MCF 10A (cell line): ENCODE measurements at regions of chr22 and their contacts with region 1.

Region 1: DNA sequence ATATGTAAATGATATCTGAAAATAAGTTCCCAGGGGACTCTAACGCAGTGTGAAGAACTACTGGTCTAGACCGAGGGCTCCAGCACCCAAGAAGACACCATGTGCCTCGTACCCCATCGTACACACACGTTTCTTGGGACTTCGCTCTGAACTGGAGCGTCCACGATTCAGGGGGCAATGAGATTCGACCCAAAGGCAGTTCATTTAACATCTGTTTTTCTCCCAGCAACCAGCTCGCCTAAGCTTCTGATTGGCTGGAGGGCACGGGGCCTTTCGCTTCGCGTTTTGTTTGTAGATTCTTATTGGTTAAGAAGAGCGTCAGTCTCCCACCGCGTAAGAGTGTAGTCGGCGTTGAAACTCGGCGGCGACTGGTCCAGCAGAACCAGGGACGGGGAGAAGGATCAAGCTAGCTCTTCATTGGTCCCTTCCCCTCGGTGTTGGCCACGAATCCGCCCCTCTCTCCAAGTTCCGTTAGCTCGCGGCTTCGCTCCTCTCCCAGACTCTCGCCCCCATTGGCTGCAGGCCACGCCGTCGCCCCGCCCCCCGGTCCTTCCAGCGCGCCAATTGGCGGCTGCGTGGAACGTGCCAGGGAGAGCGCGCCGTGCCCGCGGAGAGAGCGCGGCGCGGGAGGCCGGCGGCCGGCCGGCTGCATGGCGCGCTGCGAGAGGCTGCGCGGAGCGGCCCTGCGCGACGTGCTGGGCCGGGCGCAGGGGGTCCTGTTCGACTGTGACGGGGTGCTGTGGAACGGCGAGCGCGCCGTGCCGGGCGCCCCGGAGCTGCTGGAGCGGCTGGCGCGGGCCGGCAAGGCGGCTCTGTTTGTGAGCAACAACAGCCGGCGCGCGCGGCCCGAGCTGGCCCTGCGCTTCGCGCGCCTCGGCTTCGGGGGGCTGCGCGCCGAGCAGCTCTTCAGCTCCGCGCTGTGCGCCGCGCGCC is at the start of gene PDXP:
- DNase-seq: peak; percentile 100
- H3K4me3 Mint-ChIP-seq: peak within 1 kb of the TSS; percentile 89
- H3K27ac Mint-ChIP-seq: peak within 1 kb of the TSS; percentile 87
- H3K4me1 Mint-ChIP-seq: peaks cover 22% of the 10 kb centered on the region
- H3K27me3 Mint-ChIP-seq: no peaks in the 10 kb centered on the region
- CTCF ChIP-seq: no peak
- total RNA-seq, gene PDXP: 10.3 and 10.5 TPM in 2 replicates

Region 2: DNA sequence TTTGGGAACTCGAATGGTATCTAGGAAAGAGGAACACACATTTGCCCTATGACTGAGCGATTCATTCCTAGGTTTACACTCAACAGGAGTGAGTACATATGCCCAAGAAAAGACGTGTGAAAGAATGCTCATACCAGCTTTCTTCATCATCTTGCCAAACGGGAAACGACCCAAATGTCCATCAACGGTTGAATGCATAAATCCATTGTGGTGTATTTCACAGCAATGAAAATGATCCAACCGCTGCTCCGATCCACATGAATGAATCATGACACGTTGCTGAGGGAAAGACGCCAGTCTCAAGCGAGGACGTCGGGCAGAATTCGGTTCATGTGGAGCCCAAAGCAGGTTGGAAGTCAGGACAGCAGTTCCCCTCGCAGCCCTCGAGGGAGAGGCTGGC is 304.6 kb before region 1 on chr22:
- CTCF ChIA-PET with region 1: no interaction called
- POLR2A ChIA-PET with region 1: no interaction called
- intact Hi-C with region 1: no loop called
- DNase-seq: no peak
- H3K4me3 Mint-ChIP-seq: no peak overlapping the region
- H3K27ac Mint-ChIP-seq: no peak overlapping the region
- H3K4me1 Mint-ChIP-seq: no peaks in the 10 kb centered on the region
- H3K27me3 Mint-ChIP-seq: no peaks in the 10 kb centered on the region
- CTCF ChIP-seq: no peak

Region 3: GRCh38 chr22:37588546-37589215 is 69.7 kb before region 1 on chr22:
- CTCF ChIA-PET with region 1: no interaction called
- POLR2A ChIA-PET with region 1: no interaction called
- intact Hi-C with region 1: no loop called
- DNase-seq: no peak
- H3K4me3 Mint-ChIP-seq: no peak overlapping the region
- H3K27ac Mint-ChIP-seq: no peak overlapping the region
- H3K4me1 Mint-ChIP-seq: peaks cover 12% of the 10 kb centered on the region
- H3K27me3 Mint-ChIP-seq: no peaks in the 10 kb centered on the region
- CTCF ChIP-seq: no peak

Region 4: DNA sequence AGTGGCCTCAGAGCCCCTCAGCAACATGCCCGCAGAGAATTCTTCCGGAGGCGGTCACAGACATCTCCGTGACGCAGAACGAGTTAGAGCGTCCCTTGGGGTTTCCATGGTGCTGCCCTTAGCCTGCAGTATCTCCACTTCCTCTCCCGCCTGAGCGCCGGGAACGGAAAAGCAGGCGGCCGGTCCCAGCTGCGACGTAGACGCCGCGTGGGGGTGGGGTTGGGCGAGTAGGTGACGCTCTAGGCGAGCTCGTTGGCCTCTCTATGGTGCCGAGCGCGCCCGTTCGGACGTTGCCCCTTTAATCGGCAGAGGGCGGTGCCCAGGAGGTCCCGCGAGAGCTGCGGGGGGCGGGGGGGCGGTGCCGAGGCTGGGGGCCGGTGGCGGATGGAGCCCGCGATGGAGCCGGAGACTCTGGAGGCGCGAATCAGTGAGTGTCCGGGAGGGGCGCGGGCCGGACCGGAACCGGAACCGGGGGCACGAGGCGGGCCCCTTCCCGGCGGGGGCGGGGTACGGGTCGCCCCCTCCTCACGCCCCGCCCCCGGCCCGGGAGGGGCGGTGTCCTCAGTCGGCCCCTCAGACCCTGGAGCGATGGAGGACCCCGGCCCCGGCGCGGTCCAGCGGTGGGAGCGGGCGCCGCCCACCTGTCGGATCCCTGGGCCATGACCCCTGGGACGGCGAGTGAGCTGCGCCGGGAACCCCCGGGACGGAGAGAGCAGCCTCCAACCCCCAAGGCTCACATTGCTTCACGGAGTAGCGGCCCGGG is 49.7 kb before region 1 on chr22 and contains the start of gene GGA1:
- CTCF ChIA-PET with region 1: interaction called, 3 read pairs
- POLR2A ChIA-PET with region 1: interaction called, 23 read pairs
- intact Hi-C with region 1: no loop called
- DNase-seq: peak; percentile 96
- H3K4me3 Mint-ChIP-seq: peak within 1 kb of the TSS; percentile 85
- H3K27ac Mint-ChIP-seq: peak within 1 kb of the TSS; percentile 98
- H3K4me1 Mint-ChIP-seq: peaks cover 12% of the 10 kb centered on the region
- H3K27me3 Mint-ChIP-seq: no peaks in the 10 kb centered on the region
- CTCF ChIP-seq: no peak
- total RNA-seq, gene GGA1: 52.7 and 59.1 TPM in 2 replicates

Region 5: DNA sequence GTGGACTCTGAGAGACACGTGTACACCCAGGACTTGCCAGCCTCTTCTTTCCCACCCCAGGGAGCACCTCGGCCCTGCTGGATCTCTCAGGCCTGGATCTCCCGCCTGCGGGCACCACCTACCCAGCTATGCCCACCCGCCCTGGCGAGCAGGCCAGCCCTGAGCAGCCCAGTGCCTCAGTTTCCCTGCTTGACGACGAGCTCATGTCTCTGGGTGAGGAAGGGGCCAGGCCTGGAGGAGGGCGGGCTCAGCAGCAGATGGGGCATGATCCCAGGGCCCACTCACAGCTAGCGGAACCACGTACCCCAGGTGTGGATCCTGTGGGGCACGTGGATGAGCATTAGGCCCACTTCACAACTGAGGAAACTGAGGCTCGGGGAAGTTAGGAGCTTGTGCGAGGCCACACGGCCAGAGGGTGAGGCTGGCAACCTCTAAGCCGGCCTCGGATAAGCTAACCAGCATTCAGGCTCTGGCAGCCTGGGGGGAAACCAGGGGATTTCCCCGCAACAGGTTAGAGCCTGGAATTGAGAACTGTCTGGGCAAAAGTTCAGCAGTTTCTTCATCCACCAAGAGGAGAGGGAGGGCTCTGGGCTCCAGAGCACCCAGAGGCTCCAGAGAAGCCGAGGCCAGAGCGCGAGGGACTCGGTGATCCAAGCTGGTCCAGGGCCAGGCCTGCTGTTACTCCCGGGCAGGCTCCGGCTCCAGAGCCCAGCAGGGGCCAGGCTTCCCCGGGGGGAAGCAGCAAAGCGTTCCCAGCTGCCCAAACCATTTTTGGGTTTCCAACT is 32.5 kb before region 1 on chr22:
- CTCF ChIA-PET with region 1: no interaction called
- POLR2A ChIA-PET with region 1: no interaction called
- intact Hi-C with region 1: no loop called
- DNase-seq: no peak
- H3K4me3 Mint-ChIP-seq: no peak overlapping the region
- H3K27ac Mint-ChIP-seq: no peak overlapping the region
- H3K4me1 Mint-ChIP-seq: no peaks in the 10 kb centered on the region
- H3K27me3 Mint-ChIP-seq: no peaks in the 10 kb centered on the region
- CTCF ChIP-seq: no peak

Region 6: DNA sequence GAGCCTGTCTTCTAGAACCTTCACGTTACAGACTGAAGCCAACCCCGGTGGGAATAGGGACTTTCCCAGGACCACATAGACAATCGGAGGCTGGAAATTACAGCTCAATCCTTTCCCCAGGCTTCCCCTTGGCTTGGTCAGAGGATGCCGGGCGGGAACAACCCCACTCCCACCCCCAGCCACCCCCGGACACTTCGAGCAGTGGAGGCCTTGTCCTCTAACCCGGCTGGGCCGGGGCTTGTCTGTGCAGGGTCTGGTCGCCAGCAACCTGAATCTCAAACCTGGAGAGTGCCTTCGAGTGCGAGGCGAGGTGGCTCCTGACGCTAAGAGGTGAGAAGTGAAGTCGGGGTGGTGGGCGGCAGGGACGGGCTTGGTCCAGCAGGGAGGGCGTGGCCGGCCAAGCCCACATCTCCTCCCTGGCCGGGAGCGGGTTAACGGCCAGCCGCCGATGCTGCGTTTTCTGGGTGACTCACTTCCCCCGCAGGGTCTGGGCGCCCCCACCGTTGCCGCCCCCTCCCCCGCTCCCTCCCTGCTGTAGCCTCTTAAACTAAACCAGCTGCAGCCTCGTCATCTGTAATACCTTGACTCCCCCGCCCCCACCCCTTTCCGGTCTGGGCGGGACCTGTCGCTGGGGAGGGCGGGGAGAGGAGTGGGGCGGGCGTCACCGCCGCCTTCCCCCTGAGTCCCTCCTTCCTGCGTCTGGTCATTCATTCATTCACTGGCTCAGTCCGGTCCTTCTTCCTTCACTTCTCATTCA is 18.5 kb after region 1 on chr22:
- CTCF ChIA-PET with region 1: interaction called, 30 read pairs
- POLR2A ChIA-PET with region 1: interaction called, 49 read pairs
- intact Hi-C with region 1: loop called (anchors 2 kb)
- DNase-seq: peak; percentile 94
- H3K4me3 Mint-ChIP-seq: peak overlapping the region; percentile 75
- H3K27ac Mint-ChIP-seq: peak overlapping the region; percentile 66
- H3K4me1 Mint-ChIP-seq: peaks cover 25% of the 10 kb centered on the region
- H3K27me3 Mint-ChIP-seq: no peaks in the 10 kb centered on the region
- CTCF ChIP-seq: no peak

Region 7: GRCh38 chr22:37686002-37686982 is 27.9 kb after region 1 on chr22 and contains the start of gene NOL12:
- CTCF ChIA-PET with region 1: interaction called, 30 read pairs
- POLR2A ChIA-PET with region 1: interaction called, 14 read pairs
- intact Hi-C with region 1: no loop called
- DNase-seq: peak; percentile 90
- H3K4me3 Mint-ChIP-seq: peak within 1 kb of the TSS; percentile 96
- H3K27ac Mint-ChIP-seq: peak within 1 kb of the TSS; percentile 96
- H3K4me1 Mint-ChIP-seq: peaks cover 30% of the 10 kb centered on the region
- H3K27me3 Mint-ChIP-seq: no peaks in the 10 kb centered on the region
- CTCF ChIP-seq: no peak
- total RNA-seq, gene NOL12: 47.1 and 50.8 TPM in 2 replicates

Region 8: DNA sequence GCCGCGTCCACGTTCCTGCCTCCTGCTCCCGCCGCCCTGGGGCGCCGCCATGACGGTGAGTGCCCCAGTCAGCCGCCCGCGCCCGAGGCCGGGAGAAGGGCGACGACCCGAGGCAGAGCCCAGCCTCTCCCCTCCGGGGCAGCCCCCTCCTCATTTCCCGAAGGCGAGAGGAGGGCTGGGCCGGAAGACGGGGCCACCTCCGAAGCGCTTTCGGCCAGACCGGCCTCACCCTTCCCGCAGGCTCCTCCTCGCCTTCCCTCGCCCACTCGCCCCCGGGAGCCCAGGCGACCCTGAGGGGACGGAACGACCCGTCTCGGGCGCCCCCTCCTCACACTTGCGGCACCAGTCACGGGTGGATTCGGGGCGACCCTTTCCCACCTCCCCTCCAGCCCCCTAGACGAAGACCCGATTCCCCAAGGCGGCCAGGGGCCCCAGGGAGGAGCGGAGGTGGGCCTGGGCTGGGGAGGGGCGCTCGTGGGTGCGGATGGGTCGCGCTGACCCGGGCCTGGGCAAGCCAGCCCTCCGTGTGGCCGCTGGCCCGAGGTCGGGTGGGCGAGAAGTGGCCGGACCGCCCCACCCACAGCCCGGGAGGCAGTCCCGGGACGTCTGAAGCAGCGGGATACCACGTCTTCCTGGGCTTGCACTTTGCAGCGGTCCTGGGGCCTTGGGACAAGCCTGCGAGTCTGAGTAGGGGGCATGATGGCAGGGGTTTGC is 88.1 kb after region 1 on chr22:
- CTCF ChIA-PET with region 1: interaction called, 3 read pairs
- POLR2A ChIA-PET with region 1: interaction called, 19 read pairs
- intact Hi-C with region 1: no loop called
- DNase-seq: no peak
- H3K4me3 Mint-ChIP-seq: peak overlapping the region; percentile 77
- H3K27ac Mint-ChIP-seq: peak overlapping the region; percentile 67
- H3K4me1 Mint-ChIP-seq: peaks cover 57% of the 10 kb centered on the region
- H3K27me3 Mint-ChIP-seq: no peaks in the 10 kb centered on the region
- CTCF ChIP-seq: no peak

Region 9: DNA sequence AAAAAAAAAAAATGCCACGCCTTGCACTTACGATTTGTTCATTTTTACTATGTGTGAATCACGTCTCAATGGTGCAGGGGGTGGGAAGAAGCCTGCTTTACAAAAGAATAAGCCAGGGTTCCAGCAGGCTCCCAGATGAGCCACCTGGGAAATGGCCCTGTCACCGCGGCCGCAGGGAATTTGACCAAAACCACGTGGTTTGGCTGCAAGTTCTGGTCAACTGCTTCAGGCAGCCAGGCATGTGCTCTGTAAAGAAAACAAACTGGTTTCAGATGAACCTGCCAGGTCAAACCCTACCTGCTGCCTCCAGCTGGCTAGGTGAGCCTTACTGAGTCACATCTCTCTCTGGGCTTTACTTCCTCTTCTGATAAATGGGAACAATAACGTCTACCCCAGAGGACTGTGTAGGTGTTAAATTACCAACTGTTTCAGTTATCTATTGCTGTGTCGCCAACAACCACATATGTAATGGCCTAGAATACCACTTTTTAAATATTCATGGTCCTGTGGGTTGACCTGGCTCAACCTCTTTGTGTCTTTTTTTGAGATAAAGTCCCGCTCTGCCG is 118.8 kb after region 1 on chr22:
- CTCF ChIA-PET with region 1: no interaction called
- POLR2A ChIA-PET with region 1: interaction called, 14 read pairs
- intact Hi-C with region 1: no loop called
- DNase-seq: peak; percentile 97
- H3K4me3 Mint-ChIP-seq: peak overlapping the region; percentile 51
- H3K27ac Mint-ChIP-seq: peak overlapping the region; percentile 76
- H3K4me1 Mint-ChIP-seq: peaks cover 20% of the 10 kb centered on the region
- H3K27me3 Mint-ChIP-seq: no peaks in the 10 kb centered on the region
- CTCF ChIP-seq: no peak

Region 10: GRCh38 chr22:38069372-38070249 is 411.2 kb after region 1 on chr22:
- CTCF ChIA-PET with region 1: no interaction called
- POLR2A ChIA-PET with region 1: no interaction called
- intact Hi-C with region 1: no loop called
- DNase-seq: no peak
- H3K4me3 Mint-ChIP-seq: no peak overlapping the region
- H3K27ac Mint-ChIP-seq: no peak overlapping the region
- H3K4me1 Mint-ChIP-seq: no peaks in the 10 kb centered on the region
- H3K27me3 Mint-ChIP-seq: no peaks in the 10 kb centered on the region
- CTCF ChIP-seq: peak; percentile 29